ENCODE measurements at regions of chr19 and their contacts with region 1.

Region 1: DNA sequence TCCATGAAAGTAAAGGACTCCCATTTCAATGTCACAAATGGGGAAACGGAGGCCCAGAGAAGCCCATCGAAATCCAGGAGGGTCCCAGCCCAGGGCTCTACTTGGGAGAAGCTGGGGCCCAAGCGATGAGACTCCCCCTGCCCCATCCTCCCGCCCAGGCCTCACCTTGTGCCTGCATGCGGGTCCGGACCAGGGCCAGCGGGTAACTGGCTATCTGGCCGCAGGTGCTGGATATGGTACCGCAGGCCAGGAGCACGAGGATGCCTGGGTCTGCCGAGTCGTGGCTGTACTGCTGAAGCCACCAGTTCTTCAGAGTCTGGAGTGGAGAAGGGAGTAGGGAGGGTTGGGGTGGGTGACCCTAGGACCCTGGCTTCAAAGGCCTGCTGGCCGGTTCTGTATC is 10.4 kb upstream of the SLC25A41 start:
- DNase-seq: no peak
- H3K4me3 ChIP-seq: no peak overlapping the region
- H3K27ac ChIP-seq: no peak overlapping the region
- H3K4me1 ChIP-seq: no peaks in the 10 kb centered on the region
- H3K27me3 ChIP-seq: no peaks in the 10 kb centered on the region
- CTCF ChIP-seq: no peak
- POLR2A ChIP-seq: no peak

Region 2: GRCh38 chr19:6393074-6393983 is 50.7 kb before region 1 on chr19 and contains the start of gene GTF2F1:
- CTCF ChIA-PET with region 1: no interaction called
- POLR2A ChIA-PET with region 1: no interaction called
- dilution Hi-C with region 1: no loop called
- intact Hi-C with region 1: no loop called
- DNase-seq: peak; percentile 92
- H3K4me3 ChIP-seq: peak within 1 kb of the TSS; percentile 42 to 77 (median 74)
- H3K27ac ChIP-seq: peak within 1 kb of the TSS; percentile 77
- H3K4me1 ChIP-seq: peaks cover 7% of the 10 kb centered on the region
- H3K27me3 ChIP-seq: no peaks in the 10 kb centered on the region
- CTCF ChIP-seq: peak in 1 of 2 donors; percentile 9
- POLR2A ChIP-seq: peak; percentile 75
- total RNA-seq, gene GTF2F1: 56.4 and 58.2 TPM in 2 replicates

Region 3: GRCh38 chr19:8028951-8029491 is 1585.0 kb after region 1 on chr19:
- CTCF ChIA-PET with region 1: no interaction called
- POLR2A ChIA-PET with region 1: interaction called, 13 read pairs
- dilution Hi-C with region 1: no loop called
- intact Hi-C with region 1: no loop called
- DNase-seq: no peak
- H3K4me3 ChIP-seq: no peak overlapping the region
- H3K27ac ChIP-seq: no peak overlapping the region
- H3K4me1 ChIP-seq: no peaks in the 10 kb centered on the region
- H3K27me3 ChIP-seq: peaks cover 0 to 4% of the 10 kb centered on the region in 2 experiments
- CTCF ChIP-seq: no peak
- POLR2A ChIP-seq: no peak

Measured in endothelial cell of umbilical vein (primary cell).